ENCODE measurements at regions of chr2 and their contacts with region 1.

Region 1: DNA sequence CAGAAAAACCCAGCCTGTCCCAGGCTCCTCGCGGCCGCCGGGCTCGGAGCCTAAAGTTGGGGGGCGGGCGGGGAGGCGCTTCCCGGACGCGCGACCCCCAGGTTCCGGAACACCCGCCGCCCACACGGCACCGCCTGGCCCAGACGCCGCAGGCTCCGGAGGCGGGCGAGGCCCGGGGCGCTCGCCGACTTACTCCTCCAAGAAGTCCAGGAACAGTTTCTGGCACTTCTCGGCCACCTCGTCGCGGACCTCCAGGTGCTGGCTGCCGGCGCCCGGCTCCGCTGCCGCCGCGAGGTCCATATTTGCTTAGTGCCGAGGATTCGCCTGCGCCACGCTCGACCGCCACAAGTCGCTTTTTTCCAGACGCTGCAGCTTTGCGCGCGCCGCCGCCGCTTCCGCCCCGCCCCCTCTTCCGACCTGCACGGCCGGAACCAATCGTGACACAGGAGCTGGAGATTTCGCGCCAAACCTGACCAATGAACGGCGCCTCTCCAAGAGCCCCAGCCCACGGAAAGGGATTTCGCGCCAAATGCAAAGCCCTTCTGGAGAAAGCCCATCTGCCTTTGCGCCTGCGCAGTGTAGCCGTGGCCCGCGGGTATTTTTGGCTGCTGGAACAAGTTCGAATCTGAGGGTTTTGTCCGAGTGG is at the start of gene MCM6:
- DNase-seq: peak; percentile 100
- H3K4me3 ChIP-seq: peak within 1 kb of the TSS; percentile 84
- H3K27ac ChIP-seq: peak within 1 kb of the TSS; percentile 62
- H3K4me1 ChIP-seq: peaks cover 26% of the 10 kb centered on the region
- CTCF ChIP-seq: 0 out of 2 replicates have a peak, but pooled peaks have one; percentile 15
- total RNA-seq, gene MCM6: 61.2 and 66.1 TPM in 2 replicates

Region 2: DNA sequence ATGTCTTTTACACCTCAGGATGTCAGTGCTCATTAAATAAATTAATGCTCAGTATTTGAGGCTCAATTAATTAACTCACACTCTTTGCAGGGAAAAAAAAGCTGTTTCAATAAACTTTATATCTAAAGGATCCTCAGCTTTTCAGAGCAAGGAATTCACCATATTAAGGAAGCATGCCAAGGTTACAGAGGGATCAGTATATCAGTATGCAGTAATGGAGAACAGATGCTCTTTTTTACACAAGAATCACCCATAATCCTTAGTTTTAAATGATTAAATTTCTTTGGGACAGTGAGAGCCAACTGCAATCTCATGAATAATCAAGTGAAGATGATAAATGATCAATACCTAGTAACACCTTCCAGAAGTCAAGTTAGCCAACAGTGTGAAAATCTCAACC is 24.3 kb before region 1 on chr2:
- CTCF ChIA-PET with region 1: no interaction called
- POLR2A ChIA-PET with region 1: interaction called, 6 read pairs
- intact Hi-C with region 1: loop called (anchors 2 kb)
- DNase-seq: no peak
- H3K4me3 ChIP-seq: no peak overlapping the region
- H3K27ac ChIP-seq: no peak overlapping the region
- H3K4me1 ChIP-seq: no peaks in the 10 kb centered on the region
- CTCF ChIP-seq: no peak

Region 3: GRCh38 chr2:135985018-135985825 is 109.0 kb after region 1 on chr2 and contains the start of gene DARS1:
- CTCF ChIA-PET with region 1: no interaction called
- POLR2A ChIA-PET with region 1: no interaction called
- intact Hi-C with region 1: loop called (anchors 1 kb)
- DNase-seq: peak; percentile 93
- H3K4me3 ChIP-seq: peak within 1 kb of the TSS; percentile 85
- H3K27ac ChIP-seq: peak within 1 kb of the TSS; percentile 79
- H3K4me1 ChIP-seq: peaks cover 49% of the 10 kb centered on the region
- CTCF ChIP-seq: no peak
- total RNA-seq, gene DARS1: 90.5 and 108 TPM in 2 replicates